B cell (primary cell): ENCODE measurements at regions of chr10 and their contacts with region 1.

Region 1: DNA sequence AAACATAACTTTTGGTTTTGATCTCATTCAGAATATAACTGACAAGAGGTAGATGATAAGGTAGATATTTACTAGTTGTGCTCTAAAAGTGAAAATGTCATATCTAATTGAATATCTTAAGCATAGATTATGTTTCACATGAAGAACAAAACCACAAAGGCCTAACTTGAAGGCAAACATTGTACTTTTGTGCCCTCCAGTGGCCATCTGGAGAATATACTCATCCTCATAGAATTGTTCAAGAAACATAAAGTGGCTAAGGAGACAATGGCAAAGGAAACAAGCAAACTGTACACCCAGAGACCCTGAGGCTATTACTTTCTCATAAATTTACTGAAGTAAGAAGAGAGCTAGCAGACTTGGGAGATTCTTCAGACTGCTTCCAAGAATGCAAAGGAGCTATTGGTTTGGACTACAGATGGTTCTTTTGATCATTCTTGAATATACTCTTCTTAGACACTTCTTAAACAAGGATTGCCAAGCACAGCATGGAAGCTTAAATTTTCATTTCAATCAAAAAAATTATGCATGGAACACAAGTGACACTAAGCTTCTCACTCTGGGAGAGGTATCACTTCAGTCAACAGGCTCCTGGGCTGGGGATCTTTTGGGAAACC is 98.2 kb upstream of the DKK1 start:
- DNase-seq: peak; percentile 71
- ATAC-seq: peak; percentile 64
- H3K4me3 ChIP-seq: no peak overlapping the region
- H3K4me3 Mint-ChIP-seq: peak overlapping the region; percentile 46
- H3K27ac ChIP-seq: peak overlapping the region in 1 of 2 donors; percentile 73
- H3K27ac Mint-ChIP-seq: peak overlapping the region; percentile 1
- H3K4me1 ChIP-seq: peaks cover 24 to 28% of the 10 kb centered on the region in 2 donors
- H3K4me1 Mint-ChIP-seq: peaks cover 37% of the 10 kb centered on the region
- H3K27me3 ChIP-seq: no peaks in the 10 kb centered on the region
- H3K27me3 Mint-ChIP-seq: no peaks in the 10 kb centered on the region
- CTCF ChIP-seq: peak; percentile 89

Region 2: DNA sequence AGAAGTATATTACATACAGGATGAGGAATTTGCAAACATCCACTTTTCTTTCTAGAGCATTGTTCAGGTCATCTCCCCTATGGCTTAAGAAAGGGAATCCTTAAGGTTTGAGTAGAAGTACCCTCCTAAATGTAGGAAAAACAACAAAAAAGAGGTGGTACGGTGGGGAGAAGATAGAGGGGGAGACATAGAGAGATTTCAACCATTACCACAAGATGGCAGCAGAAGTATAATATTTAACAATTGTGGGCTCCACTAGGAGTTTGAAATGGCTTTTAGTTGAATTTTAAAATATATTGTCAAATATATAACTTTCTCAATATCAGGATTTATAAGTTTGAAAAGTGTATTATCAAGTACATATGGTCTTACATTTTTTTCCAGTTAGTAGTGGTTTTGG is 1214.3 kb before region 1 on chr10:
- CTCF ChIA-PET with region 1: interaction called, 9 read pairs
- POLR2A ChIA-PET with region 1: no interaction called
- intact Hi-C with region 1: loop called (anchors 2 kb)
- DNase-seq: peak; percentile 25
- ATAC-seq: no peak
- H3K4me3 ChIP-seq: no peak overlapping the region
- H3K4me3 Mint-ChIP-seq: no peak overlapping the region
- H3K27ac ChIP-seq: no peak overlapping the region
- H3K27ac Mint-ChIP-seq: no peak overlapping the region
- H3K4me1 ChIP-seq: no peaks in the 10 kb centered on the region
- H3K4me1 Mint-ChIP-seq: no peaks in the 10 kb centered on the region
- H3K27me3 ChIP-seq: peaks cover 0 to 12% (median 0%) of the 10 kb centered on the region in 4 experiments
- H3K27me3 Mint-ChIP-seq: peaks cover 19% of the 10 kb centered on the region
- CTCF ChIP-seq: peak; percentile 74

Region 3: DNA sequence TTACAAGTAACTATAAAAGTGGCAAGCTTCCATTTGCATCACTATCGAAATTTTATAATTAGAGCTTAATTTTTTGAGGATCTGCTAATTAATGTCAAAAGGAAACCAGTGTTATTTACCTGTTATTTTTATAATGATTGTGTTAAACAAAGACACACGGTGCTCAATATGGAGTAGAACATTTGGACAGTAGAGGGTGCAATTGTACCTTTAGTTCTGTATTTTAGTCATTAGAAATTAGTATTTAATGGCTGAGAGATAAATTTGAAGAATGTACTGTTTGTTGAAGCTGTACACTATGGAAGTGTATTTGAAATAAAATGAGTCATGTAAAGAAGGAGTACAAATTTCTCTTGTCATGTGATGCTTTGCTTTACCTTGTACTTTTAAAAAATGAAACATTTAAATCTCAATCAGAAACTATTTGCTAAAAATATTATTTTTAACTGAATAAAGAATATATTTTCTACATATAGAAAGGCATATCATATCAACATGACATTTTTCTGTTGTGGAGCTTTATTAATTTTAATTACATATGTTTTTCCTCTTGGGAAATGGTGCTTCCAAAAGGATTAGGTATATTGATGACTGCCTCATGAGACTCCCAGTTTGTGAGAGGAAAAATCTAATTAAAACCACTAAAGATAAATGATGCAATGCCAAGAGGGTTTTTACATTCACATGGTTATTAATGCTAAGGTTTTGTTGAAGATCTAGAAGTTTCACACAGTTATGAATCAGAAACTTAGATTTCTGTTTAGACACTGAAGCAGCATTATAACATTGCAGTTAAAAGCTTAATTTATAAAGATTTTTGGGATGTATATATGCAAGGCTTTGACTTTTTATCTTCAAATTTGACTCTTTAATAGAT is 1152.0 kb before region 1 on chr10:
- CTCF ChIA-PET with region 1: interaction called, 4 read pairs
- POLR2A ChIA-PET with region 1: no interaction called
- intact Hi-C with region 1: loop called (anchors 5 kb)
- DNase-seq: no peak
- ATAC-seq: no peak
- H3K4me3 ChIP-seq: no peak overlapping the region
- H3K4me3 Mint-ChIP-seq: no peak overlapping the region
- H3K27ac ChIP-seq: no peak overlapping the region
- H3K27ac Mint-ChIP-seq: no peak overlapping the region
- H3K4me1 ChIP-seq: no peaks in the 10 kb centered on the region
- H3K4me1 Mint-ChIP-seq: no peaks in the 10 kb centered on the region
- H3K27me3 ChIP-seq: no peaks in the 10 kb centered on the region
- H3K27me3 Mint-ChIP-seq: peaks cover 6% of the 10 kb centered on the region
- CTCF ChIP-seq: peak; percentile 24

Region 4: GRCh38 chr10:51389415-51390321 is 826.2 kb before region 1 on chr10:
- CTCF ChIA-PET with region 1: interaction called, 17 read pairs
- POLR2A ChIA-PET with region 1: no interaction called
- intact Hi-C with region 1: no loop called
- DNase-seq: peak; percentile 21
- ATAC-seq: no peak
- H3K4me3 ChIP-seq: no peak overlapping the region
- H3K4me3 Mint-ChIP-seq: no peak overlapping the region
- H3K27ac ChIP-seq: no peak overlapping the region
- H3K27ac Mint-ChIP-seq: no peak overlapping the region
- H3K4me1 ChIP-seq: no peaks in the 10 kb centered on the region
- H3K4me1 Mint-ChIP-seq: no peaks in the 10 kb centered on the region
- H3K27me3 ChIP-seq: no peaks in the 10 kb centered on the region
- H3K27me3 Mint-ChIP-seq: no peaks in the 10 kb centered on the region
- CTCF ChIP-seq: peak; percentile 67

Region 5: GRCh38 chr10:51744235-51745000 is 471.4 kb before region 1 on chr10:
- CTCF ChIA-PET with region 1: no interaction called
- POLR2A ChIA-PET with region 1: no interaction called
- intact Hi-C with region 1: no loop called
- DNase-seq: no peak
- ATAC-seq: no peak
- H3K4me3 ChIP-seq: no peak overlapping the region
- H3K4me3 Mint-ChIP-seq: no peak overlapping the region
- H3K27ac ChIP-seq: no peak overlapping the region
- H3K27ac Mint-ChIP-seq: no peak overlapping the region
- H3K4me1 ChIP-seq: peaks cover 3 to 5% of the 10 kb centered on the region in 2 donors
- H3K4me1 Mint-ChIP-seq: peaks cover 11% of the 10 kb centered on the region
- H3K27me3 ChIP-seq: no peaks in the 10 kb centered on the region
- H3K27me3 Mint-ChIP-seq: peaks cover 2% of the 10 kb centered on the region
- CTCF ChIP-seq: no peak